ENCODE measurements at regions of chr11 and their contacts with region 1.

Region 1: GRCh38 chr11:118928108-118928870 is 2.6 kb upstream of the BCL9L start:
- DNase-seq: peak; percentile 96

Region 2: GRCh38 chr11:118689851-118690552 is 238.3 kb before region 1 on chr11:
- intact Hi-C with region 1: loop called in 1 of 2 experiments (anchors 10 kb)
- DNase-seq: peak; percentile 98

Region 3: GRCh38 chr11:118889781-118890180 is 38.5 kb before region 1 on chr11:
- intact Hi-C with region 1: loop called in 1 of 2 experiments (anchors 5 kb)
- DNase-seq: peak; percentile 96

Region 4: DNA sequence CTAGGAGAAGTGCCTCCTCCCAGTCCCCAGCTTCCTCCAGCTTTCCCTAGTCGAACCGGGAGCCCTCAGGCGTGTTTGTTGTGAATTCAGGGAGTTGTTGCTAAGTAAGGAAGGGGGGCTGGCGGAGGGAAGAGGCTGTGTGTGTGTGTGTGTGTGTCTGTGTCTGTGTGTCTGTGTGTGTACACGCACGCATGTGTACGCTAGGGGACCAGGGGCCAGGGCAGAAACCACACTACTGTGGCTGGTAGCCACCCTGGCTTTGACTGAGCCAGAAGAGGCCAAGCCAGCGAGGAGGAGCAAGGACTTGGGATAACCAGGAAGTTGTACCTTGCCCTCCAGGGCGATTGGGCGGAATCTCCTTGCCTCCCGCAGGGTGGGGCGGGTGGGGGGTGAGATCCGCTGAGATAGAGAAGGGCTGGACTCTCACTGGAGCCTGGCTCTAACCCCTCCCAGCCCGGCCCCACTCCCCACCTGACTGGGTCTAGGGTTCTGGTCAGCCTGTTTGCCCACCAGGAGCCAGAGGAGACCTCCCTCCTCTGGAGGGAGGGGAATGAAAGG is 10.1 kb before region 1 on chr11:
- intact Hi-C with region 1: loop called in 1 of 2 experiments (anchors 1 kb)
- DNase-seq: peak; percentile 97

Region 5: DNA sequence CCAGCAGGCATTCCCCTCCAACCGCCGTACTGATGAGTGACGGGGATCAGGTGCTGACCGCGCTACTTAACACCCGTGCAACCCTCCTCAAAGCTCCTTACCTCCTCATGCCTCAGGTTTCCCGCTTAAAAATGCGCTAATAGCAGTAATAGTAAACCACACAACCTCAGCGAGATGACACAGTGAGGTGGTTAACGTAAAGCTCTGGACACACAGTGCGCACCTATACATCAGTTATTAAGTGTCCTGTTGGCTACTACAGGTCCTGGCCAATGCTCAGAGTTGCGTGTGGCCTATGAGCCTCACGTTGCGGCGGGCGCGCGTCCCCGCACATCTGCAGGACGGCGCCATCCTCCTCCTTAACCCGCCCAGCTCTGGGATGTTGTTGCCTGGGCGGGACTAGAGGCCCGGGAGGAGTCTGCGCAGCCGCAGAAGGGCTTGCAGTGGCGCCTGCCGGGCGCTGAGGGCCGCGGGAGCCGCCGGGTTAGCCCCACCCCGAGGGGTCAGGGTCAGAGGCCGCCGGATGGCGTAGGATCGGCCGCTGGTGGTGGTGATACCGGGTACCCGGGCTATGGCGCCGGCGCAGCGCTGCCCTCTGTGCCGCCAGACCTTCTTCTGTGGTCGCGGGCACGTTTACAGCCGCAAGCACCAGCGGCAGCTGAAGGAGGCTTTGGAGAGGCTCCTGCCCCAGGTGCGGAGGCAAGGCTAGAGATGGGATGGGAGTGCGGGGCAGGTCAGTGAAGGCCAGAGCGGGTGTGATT is 69.5 kb after region 1 on chr11 and contains the start of gene CENATAC:
- intact Hi-C with region 1: no loop called
- DNase-seq: peak; percentile 99
- total RNA-seq, gene CENATAC: 27.8 TPM